ENCODE measurements at regions of chr4 and their contacts with region 1.

Region 1: DNA sequence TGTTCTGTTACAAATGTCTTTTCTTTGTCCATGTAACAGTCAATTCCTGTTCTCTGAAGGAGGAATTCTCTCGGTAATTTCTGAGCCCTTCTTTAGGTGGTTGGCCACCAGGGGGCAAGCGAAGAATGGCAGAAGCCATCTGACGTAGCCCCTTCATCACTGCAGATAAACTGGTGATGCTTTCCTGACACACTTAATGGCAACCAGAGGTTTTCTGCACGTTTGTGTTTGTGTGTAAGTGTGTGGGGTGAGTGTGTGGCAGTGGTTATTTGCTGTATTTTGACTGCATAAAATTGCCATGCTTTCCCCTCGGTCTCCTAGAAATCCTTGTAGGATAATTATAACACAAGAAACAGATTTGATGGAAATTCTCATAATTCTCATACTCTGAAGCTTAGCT is 64.8 kb upstream of the STOX2 start:
- DNase-seq: peak; percentile 77 to 92 (median 88)
- H3K4me3 ChIP-seq: peak overlapping the region in 10 of 59 donors; percentile 6 to 39 (median 19)
- H3K27ac ChIP-seq: no peak overlapping the region
- H3K27me3 ChIP-seq: no peaks in the 10 kb centered on the region
- CTCF ChIP-seq: peak; percentile 84 to 99 (median 96)

Region 2: GRCh38 chr4:183388777-183389176 is 451.5 kb before region 1 on chr4:
- intact Hi-C with region 1: no loop called
- DNase-seq: no peak
- H3K4me3 ChIP-seq: no peak overlapping the region
- H3K27ac ChIP-seq: no peak overlapping the region
- H3K27me3 ChIP-seq: peaks cover 0 to 8% (median 0%) of the 10 kb centered on the region in 45 donors
- CTCF ChIP-seq: no peak

Region 3: DNA sequence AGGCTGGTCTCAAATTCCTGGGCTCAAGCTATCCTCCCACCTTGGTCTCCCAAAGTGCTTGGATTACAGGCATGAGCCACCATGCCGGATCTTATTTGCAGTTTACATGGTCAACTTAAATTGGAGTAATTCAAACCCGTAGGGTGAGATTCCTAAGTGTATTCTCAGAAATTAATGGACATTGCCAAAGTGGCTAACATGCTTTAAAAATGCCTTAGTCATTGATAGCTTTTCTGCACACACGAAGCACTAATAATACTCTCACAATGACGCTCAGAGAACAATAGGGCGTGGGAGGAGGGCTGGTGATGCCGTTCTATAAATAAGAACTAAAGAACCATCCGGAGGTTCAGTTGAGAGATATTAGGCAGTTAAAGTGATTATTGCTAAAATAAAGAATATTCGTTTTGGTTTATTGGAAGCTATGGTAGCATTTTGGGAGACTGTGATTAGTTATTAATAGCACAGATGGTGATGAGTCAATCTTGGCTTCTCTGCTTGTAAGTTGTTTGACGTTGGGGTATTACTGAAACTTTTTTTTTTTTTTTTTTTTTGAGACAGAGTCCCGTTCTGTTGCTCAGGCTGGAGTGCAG is 102.1 kb before region 1 on chr4:
- intact Hi-C with region 1: no loop called
- DNase-seq: no peak
- H3K4me3 ChIP-seq: no peak overlapping the region
- H3K27ac ChIP-seq: no peak overlapping the region
- H3K27me3 ChIP-seq: no peaks in the 10 kb centered on the region
- CTCF ChIP-seq: no peak

Region 4: GRCh38 chr4:183960046-183960420 is 119.7 kb after region 1 on chr4:
- intact Hi-C with region 1: loop called in 1 of 2 experiments (anchors 10 kb)
- DNase-seq: peak; percentile 82 to 98 (median 92)
- H3K4me3 ChIP-seq: peak overlapping the region; percentile 26 to 76 (median 55)
- H3K27ac ChIP-seq: peak overlapping the region; percentile 33 to 97 (median 90)
- H3K27me3 ChIP-seq: no peaks in the 10 kb centered on the region
- CTCF ChIP-seq: peak in 6 of 56 donors; percentile 5 to 30 (median 16)

Region 5: GRCh38 chr4:184100297-184100885 is 260.1 kb after region 1 on chr4:
- intact Hi-C with region 1: loop called (anchors 2 kb)
- DNase-seq: peak in 4 of 10 donors; percentile 49 to 83 (median 67)
- H3K4me3 ChIP-seq: no peak overlapping the region
- H3K27ac ChIP-seq: peak overlapping the region in 58 of 59 donors; percentile 3 to 92 (median 68)
- H3K27me3 ChIP-seq: no peaks in the 10 kb centered on the region
- CTCF ChIP-seq: peak in 43 of 56 donors; percentile 37 to 95 (median 67)

Region 6: DNA sequence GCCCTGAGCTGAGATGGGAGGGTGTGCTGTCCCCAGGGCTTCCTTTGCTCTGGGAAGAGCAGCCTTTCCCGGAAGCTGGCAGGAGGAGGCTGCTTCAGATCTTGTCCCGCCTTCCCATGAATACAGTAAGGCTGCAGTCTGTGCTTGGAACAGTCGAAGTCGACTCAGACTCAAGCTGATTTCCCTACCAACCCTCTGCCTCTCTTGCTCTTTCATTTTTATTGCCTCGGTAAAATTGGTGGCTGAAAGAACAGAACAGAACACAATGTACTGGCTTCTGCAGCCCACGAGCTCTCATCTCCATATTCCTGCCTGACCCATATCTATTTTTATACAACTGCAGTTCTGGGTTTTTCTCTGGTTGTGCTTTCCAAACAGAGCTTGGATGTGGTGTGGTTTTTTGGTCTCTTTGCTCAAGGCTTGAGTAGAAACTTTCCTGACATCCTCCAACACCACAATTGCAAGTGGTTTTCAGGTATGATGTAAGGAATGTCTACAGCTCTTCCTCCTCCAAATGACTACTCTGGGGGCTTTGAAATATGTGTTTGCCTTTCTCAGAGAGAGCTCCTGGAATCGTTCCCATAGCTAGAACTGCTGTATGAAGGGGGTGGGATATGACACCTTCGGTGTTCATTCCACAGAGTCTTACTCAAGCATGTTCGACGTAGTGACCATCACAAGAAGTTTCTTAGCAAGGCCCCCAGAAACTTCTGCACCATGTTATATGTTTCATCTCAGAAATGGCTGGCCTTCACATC is 316.0 kb after region 1 on chr4:
- intact Hi-C with region 1: no loop called
- DNase-seq: peak in 2 of 10 donors; percentile 46 to 53
- H3K4me3 ChIP-seq: no peak overlapping the region
- H3K27ac ChIP-seq: peak overlapping the region in 57 of 59 donors; percentile 6 to 92 (median 77)
- H3K27me3 ChIP-seq: no peaks in the 10 kb centered on the region
- CTCF ChIP-seq: no peak

Region 7: DNA sequence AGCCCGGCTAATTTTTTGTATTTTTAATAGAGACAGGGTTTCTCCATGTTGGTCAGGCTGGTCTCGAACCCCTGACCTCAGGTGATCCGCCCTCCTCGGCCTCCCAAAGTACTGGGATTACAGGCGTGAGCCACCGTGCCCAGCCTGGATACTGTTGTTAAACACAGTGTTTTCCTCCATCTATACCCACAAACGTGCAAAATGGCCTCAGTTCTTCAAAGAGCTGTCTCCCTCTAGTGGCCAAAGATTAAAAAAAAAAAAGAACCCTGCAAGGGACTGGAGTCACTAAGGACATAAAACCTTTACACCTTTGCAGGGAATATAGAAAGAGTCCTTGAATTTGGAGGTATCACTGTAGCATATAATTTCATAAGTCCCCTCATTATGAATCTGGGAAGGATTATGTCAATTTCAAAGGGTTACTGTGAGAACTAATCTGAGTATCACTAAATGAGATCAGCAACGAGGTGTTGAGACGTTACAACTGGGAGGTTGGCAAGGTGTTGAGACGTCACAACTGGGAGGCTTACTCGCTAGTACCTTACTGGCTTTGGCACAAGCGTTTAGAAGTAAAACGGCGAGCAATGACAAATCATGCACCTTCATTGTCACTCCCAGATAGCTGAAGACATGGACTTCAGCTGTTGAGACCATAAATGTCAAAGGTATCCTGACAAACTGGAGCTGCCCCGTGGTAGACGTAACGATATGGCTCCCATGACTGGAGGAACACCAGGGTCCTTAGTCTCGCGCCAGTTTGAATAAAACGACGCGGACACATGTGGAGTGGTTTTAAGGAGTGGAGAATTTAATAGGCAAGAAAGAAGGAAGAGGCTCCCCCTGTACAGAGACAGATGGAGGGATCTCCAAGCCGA is 410.7 kb after region 1 on chr4:
- intact Hi-C with region 1: loop called in 1 of 2 experiments (anchors 2 kb)
- DNase-seq: no peak
- H3K4me3 ChIP-seq: no peak overlapping the region
- H3K27ac ChIP-seq: no peak overlapping the region
- H3K27me3 ChIP-seq: no peaks in the 10 kb centered on the region
- CTCF ChIP-seq: peak; percentile 43 to 77 (median 66)